Endothelial cell of umbilical vein (primary cell): ENCODE measurements at regions of chr10 and their contacts with region 1.

Region 1: GRCh38 chr10:29998142-29998808 is 61.1 kb downstream of the JCAD start:
- DNase-seq: peak; percentile 84
- H3K4me3 ChIP-seq: no peak overlapping the region
- H3K27ac ChIP-seq: no peak overlapping the region
- H3K4me1 ChIP-seq: peaks cover 6% of the 10 kb centered on the region
- H3K27me3 ChIP-seq: no peaks in the 10 kb centered on the region
- CTCF ChIP-seq: peak; percentile 98
- POLR2A ChIP-seq: no peak

Region 2: GRCh38 chr10:29857843-29858701 is 140.2 kb before region 1 on chr10:
- CTCF ChIA-PET with region 1: interaction called, 7 read pairs
- POLR2A ChIA-PET with region 1: no interaction called
- dilution Hi-C with region 1: no loop called
- intact Hi-C with region 1: loop called (anchors 2 kb)
- DNase-seq: peak; percentile 92
- H3K4me3 ChIP-seq: no peak overlapping the region
- H3K27ac ChIP-seq: no peak overlapping the region
- H3K4me1 ChIP-seq: peaks cover 21% of the 10 kb centered on the region
- H3K27me3 ChIP-seq: no peaks in the 10 kb centered on the region
- CTCF ChIP-seq: peak; percentile 79 to 86
- POLR2A ChIP-seq: no peak

Region 3: DNA sequence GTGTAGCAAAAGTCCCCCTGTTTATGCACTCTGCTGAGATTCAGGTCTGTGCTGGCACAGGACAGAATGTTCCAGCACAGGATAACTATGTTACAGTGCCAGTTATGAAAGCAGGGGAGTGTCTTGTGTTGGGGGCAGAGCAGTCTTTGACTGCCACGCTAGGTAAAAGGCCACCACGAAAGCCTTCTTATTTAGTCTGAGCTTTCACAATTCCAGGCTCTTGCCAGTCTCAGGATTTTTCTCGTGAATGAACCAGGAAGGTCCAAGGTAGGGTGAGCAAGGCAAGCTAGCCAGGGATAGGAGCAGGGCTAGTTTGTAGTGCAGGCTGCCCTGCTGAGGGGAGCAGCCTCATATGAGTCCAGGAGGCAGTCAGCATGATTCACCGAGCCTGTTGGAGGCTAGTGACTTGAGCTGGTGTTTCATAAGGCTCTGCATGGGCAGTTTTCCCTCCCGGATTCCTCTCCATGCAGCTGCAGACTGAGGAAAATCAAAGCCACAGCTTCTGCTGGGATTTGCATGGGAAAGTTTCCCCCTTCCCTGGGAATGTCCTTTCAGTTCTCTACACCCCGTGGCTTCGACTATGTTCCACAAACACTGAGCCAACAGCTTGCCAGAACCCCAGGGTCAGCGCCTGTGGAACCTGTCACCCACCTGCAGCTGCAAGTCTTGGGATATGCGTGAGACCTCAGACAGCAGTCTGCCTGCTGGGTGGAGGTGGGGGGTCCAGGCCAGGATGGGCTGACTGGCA is 51.1 kb before region 1 on chr10:
- CTCF ChIA-PET with region 1: interaction called, 20 read pairs
- POLR2A ChIA-PET with region 1: no interaction called
- dilution Hi-C with region 1: no loop called
- intact Hi-C with region 1: loop called (anchors 1 kb)
- DNase-seq: peak; percentile 73
- H3K4me3 ChIP-seq: no peak overlapping the region
- H3K27ac ChIP-seq: peak overlapping the region; percentile 33
- H3K4me1 ChIP-seq: peaks cover 51% of the 10 kb centered on the region
- H3K27me3 ChIP-seq: no peaks in the 10 kb centered on the region
- CTCF ChIP-seq: no peak
- POLR2A ChIP-seq: no peak

Region 4: GRCh38 chr10:30041196-30042105 is 43.2 kb after region 1 on chr10:
- CTCF ChIA-PET with region 1: interaction called, 11 read pairs
- POLR2A ChIA-PET with region 1: no interaction called
- dilution Hi-C with region 1: no loop called
- intact Hi-C with region 1: no loop called
- DNase-seq: peak; percentile 96
- H3K4me3 ChIP-seq: no peak overlapping the region
- H3K27ac ChIP-seq: peak overlapping the region; percentile 81
- H3K4me1 ChIP-seq: peaks cover 50% of the 10 kb centered on the region
- H3K27me3 ChIP-seq: no peaks in the 10 kb centered on the region
- CTCF ChIP-seq: no peak
- POLR2A ChIP-seq: peak; percentile 52

Region 5: GRCh38 chr10:30186371-30186875 is 188.1 kb after region 1 on chr10:
- CTCF ChIA-PET with region 1: interaction called, 3 read pairs
- POLR2A ChIA-PET with region 1: no interaction called
- dilution Hi-C with region 1: no loop called
- intact Hi-C with region 1: loop called (anchors 5 kb)
- DNase-seq: peak; percentile 60
- H3K4me3 ChIP-seq: no peak overlapping the region
- H3K27ac ChIP-seq: peak overlapping the region; percentile 79
- H3K4me1 ChIP-seq: peaks cover 50% of the 10 kb centered on the region
- H3K27me3 ChIP-seq: no peaks in the 10 kb centered on the region
- CTCF ChIP-seq: peak; percentile 7 to 17
- POLR2A ChIP-seq: no peak

Region 6: GRCh38 chr10:30359373-30360206 is 361.3 kb after region 1 on chr10:
- CTCF ChIA-PET with region 1: interaction called, 12 read pairs
- POLR2A ChIA-PET with region 1: no interaction called
- dilution Hi-C with region 1: no loop called
- intact Hi-C with region 1: no loop called
- DNase-seq: peak; percentile 56
- H3K4me3 ChIP-seq: no peak overlapping the region
- H3K27ac ChIP-seq: no peak overlapping the region
- H3K4me1 ChIP-seq: no peaks in the 10 kb centered on the region
- H3K27me3 ChIP-seq: peaks cover 2 to 9% of the 10 kb centered on the region in 2 experiments
- CTCF ChIP-seq: peak; percentile 78 to 88
- POLR2A ChIP-seq: no peak

Region 7: GRCh38 chr10:30534465-30535144 is 536.3 kb after region 1 on chr10:
- CTCF ChIA-PET with region 1: no interaction called
- POLR2A ChIA-PET with region 1: no interaction called
- dilution Hi-C with region 1: no loop called
- intact Hi-C with region 1: loop called (anchors 10 kb)
- DNase-seq: peak; percentile 66
- H3K4me3 ChIP-seq: no peak overlapping the region
- H3K27ac ChIP-seq: no peak overlapping the region
- H3K4me1 ChIP-seq: peaks cover 10% of the 10 kb centered on the region
- H3K27me3 ChIP-seq: no peaks in the 10 kb centered on the region
- CTCF ChIP-seq: peak; percentile 76 to 81
- POLR2A ChIP-seq: no peak